Activated CD8-positive, alpha-beta T cell treated with anti-CD3 and anti-CD28 coated beads, Interleukin-2, amount 10 ng/mL, durations not matched to agents 7 days and 5 days (primary cell): ENCODE measurements at regions of chr19 and their contacts with region 1.

Region 1: DNA sequence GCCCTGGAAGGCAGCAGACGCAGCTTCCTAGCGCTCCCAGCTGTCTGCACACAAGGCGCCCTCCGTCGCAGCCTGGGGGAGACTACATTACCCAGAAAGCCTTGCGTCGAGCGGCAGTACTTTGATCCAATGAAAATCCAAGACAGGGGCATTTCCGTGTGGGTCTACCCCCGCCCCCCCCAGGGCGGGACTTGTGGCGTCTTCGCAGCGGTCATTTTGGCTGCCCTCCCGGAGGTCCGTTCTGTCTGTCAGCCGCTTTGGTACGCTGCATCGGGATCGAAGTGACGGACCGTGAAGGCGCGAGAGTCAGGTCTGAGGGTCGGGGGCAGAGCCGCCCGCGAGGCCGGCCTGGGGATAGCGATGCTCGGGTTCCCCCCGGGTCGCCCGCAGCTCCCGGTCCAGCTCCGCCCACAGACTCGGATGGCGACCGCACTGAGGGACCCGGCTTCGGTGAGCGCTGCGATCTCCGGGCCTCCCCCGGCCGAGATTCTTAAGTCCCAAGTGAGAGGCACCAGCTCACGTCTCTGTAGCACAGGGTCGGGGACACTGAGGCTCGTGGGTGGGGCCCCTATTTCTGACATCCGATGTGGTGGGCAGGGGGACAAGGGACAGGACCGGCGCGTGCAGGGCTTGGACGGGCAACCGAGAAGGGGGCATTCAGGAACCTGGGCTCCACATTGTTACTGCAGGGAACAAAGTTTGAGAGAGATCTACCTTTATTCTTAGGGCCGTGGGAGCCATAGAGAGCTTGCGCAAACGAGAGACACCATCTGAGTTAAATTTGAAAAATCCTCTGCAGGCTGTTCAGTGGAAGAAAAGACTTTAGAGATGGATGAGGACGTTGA is at the start of gene ZNF211:
- DNase-seq: peak; percentile 91
- ATAC-seq: peak; percentile 100
- H3K4me3 Mint-ChIP-seq: peak within 1 kb of the TSS; percentile 94
- H3K27ac Mint-ChIP-seq: peak within 1 kb of the TSS; percentile 85
- H3K4me1 Mint-ChIP-seq: peaks cover 17% of the 10 kb centered on the region
- H3K27me3 Mint-ChIP-seq: no peaks in the 10 kb centered on the region
- total RNA-seq, gene ZNF211: 13.6 to 14.3 TPM

Region 2: DNA sequence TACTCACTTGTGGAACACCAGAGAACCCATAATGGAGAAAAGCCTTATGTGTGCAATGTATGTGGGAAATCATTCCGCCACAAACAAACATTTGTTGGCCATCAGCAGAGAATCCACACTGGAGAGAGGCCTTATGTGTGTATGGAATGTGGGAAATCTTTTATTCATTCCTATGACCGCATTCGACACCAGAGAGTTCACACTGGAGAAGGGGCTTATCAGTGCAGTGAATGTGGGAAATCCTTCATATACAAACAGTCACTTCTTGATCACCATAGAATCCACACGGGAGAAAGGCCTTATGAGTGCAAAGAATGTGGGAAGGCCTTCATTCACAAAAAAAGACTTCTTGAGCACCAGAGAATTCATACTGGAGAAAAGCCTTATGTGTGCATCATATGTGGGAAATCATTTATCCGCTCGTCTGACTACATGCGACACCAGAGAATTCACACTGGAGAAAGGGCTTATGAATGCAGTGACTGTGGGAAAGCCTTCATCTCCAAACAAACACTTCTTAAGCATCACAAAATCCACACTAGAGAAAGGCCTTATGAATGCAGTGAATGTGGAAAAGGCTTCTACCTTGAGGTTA is 95.2 kb before region 1 on chr19:
- CTCF ChIA-PET with region 1: no interaction called
- POLR2A ChIA-PET with region 1: no interaction called
- DNase-seq: no peak
- ATAC-seq: no peak
- H3K4me3 Mint-ChIP-seq: no peak overlapping the region
- H3K27ac Mint-ChIP-seq: no peak overlapping the region
- H3K4me1 Mint-ChIP-seq: no peaks in the 10 kb centered on the region
- H3K27me3 Mint-ChIP-seq: no peaks in the 10 kb centered on the region

Region 3: DNA sequence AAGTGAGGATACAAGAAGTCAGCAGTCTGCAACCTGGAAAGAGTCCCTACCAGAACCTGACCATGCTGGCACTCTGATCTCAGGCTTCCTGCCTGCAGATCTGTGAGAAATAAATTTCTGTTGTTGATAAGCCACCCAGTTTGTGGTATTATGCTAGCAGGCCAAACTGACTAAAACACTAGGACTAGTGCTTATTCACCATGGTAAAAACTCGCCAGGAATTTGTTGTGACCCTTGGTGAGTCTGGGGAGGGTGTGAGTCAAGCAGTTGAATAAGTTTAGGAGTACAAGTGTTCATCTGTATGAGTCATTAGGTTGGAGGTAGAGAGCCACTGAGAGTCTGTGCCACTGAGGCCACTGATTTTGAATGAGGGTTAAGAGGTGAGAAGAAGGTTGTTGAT is 45.7 kb before region 1 on chr19:
- CTCF ChIA-PET with region 1: no interaction called
- POLR2A ChIA-PET with region 1: no interaction called
- DNase-seq: no peak
- ATAC-seq: no peak
- H3K4me3 Mint-ChIP-seq: no peak overlapping the region
- H3K27ac Mint-ChIP-seq: no peak overlapping the region
- H3K4me1 Mint-ChIP-seq: peaks cover 21% of the 10 kb centered on the region
- H3K27me3 Mint-ChIP-seq: no peaks in the 10 kb centered on the region

Region 4: GRCh38 chr19:57613941-57614743 is 19.1 kb before region 1 on chr19 and contains the start of gene ZNF134:
- CTCF ChIA-PET with region 1: no interaction called
- POLR2A ChIA-PET with region 1: interaction called, 12 read pairs
- DNase-seq: peak; percentile 95
- ATAC-seq: peak; percentile 100
- H3K4me3 Mint-ChIP-seq: peak within 1 kb of the TSS; percentile 90
- H3K27ac Mint-ChIP-seq: peak within 1 kb of the TSS; percentile 88
- H3K4me1 Mint-ChIP-seq: peaks cover 20% of the 10 kb centered on the region
- H3K27me3 Mint-ChIP-seq: no peaks in the 10 kb centered on the region
- total RNA-seq, gene ZNF134: 17.1 to 17.8 TPM

Region 5: DNA sequence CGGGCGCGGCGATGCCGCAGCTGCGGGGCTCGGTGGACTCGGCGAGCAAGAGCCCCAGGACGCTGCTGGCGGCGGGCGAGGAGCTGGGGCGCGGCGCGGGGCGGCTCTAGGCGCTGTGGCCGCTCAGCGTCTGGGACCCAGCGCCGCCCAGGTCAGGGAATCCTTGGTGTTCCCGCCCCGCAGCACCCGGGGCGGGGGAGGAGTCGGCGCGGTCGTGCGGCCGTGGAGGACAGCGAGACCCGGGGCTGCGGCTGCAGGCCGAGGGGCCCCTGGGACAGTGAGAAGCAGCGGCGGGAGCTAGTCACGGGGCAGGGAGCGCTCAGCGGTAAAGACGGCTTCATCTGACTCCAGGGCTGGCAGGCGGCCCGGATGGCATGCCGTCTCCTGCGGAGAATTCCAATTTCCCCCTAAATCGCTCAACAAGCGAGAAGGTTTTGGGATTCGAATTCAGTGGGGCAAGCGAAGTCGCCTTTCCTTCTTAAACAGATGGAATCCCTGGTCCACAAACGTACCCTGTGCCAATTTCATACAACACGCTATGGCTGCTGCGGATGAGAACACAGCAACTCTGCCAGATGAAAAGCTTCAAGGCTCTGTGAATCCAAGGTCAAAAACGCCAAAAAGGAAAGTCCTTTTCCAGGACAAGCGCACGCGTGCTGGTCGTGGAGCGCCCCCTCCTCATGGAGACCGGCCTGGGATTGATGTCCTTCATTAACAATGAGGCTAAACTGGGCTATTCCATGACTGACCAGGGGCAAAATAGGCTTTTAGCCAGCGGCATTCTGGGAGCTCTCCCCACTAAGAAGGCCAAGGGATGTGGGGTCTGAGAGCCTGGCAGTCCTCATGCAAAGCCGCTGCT is 31.3 kb after region 1 on chr19:
- CTCF ChIA-PET with region 1: no interaction called
- POLR2A ChIA-PET with region 1: no interaction called
- DNase-seq: no peak
- ATAC-seq: peak; percentile 69
- H3K4me3 Mint-ChIP-seq: peak overlapping the region; percentile 73
- H3K27ac Mint-ChIP-seq: no peak overlapping the region
- H3K4me1 Mint-ChIP-seq: peaks cover 3% of the 10 kb centered on the region
- H3K27me3 Mint-ChIP-seq: peaks cover 13% of the 10 kb centered on the region